SK-N-SH (cell line): ENCODE measurements at regions of chr1 and their contacts with region 1.

Region 1: DNA sequence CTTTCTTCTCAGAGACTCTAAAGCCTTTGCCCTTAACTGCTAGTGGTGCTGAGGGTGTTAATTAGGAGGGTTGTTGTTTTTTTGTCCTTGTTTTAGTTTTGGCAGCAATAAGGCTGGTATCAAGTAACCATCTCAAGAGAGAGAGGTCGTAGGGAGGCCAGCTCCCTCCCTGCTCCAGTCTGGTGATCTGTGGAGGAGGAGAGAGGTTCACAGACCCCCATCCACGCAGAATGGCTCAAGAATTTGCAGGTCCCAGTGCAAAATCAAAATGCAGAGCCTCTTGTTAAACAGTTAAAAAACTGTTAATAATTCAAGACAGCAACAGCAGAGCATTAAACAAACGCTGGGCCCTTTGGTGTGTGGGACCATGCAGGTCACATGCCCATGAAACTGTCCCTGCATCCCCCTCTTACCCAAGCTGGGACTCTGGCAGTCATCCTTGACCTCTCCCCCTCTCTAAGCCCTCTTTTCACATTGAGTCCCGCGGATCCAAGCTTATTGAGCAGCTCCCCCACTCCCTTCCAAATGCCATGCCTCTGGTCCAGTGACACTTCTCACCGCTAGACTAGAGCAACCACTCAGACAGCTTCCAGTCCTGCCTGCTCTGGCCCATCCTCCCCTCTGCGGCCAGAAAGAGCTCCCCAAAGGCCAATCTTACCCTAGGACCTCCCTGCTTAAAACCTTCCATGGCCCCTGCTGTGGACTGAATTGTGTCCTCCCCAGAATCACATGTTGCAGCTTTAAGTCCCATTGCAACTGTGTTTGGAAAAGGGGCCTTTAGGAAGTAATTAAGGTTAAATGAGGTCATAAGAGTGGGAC is 47.7 kb upstream of the RPL11 start:
- DNase-seq: no peak
- H3K4me3 ChIP-seq: no peak overlapping the region
- H3K27ac ChIP-seq: no peak overlapping the region; a peak in 1 of 4 replicates
- H3K4me1 ChIP-seq: peaks cover 0 to 19% of the 10 kb centered on the region in 2 experiments; a peak in 1 of 4 replicates
- H3K27me3 ChIP-seq: no peaks in the 10 kb centered on the region
- CTCF ChIP-seq: no peak
- EP300 ChIP-seq: no peak
- RAD21 ChIP-seq: no peak

Region 2: GRCh38 chr1:23664837-23665795 is 21.2 kb after region 1 on chr1:
- CTCF ChIA-PET with region 1: interaction called, 95 read pairs
- POLR2A ChIA-PET with region 1: no interaction called
- DNase-seq: peak; percentile 54
- H3K4me3 ChIP-seq: no peak overlapping the region; a peak in 1 of 4 replicates
- H3K27ac ChIP-seq: no peak overlapping the region
- H3K4me1 ChIP-seq: no peaks in the 10 kb centered on the region
- H3K27me3 ChIP-seq: no peaks in the 10 kb centered on the region
- CTCF ChIP-seq: peak; percentile 66
- EP300 ChIP-seq: no peak
- RAD21 ChIP-seq: peak; percentile 68

Region 3: DNA sequence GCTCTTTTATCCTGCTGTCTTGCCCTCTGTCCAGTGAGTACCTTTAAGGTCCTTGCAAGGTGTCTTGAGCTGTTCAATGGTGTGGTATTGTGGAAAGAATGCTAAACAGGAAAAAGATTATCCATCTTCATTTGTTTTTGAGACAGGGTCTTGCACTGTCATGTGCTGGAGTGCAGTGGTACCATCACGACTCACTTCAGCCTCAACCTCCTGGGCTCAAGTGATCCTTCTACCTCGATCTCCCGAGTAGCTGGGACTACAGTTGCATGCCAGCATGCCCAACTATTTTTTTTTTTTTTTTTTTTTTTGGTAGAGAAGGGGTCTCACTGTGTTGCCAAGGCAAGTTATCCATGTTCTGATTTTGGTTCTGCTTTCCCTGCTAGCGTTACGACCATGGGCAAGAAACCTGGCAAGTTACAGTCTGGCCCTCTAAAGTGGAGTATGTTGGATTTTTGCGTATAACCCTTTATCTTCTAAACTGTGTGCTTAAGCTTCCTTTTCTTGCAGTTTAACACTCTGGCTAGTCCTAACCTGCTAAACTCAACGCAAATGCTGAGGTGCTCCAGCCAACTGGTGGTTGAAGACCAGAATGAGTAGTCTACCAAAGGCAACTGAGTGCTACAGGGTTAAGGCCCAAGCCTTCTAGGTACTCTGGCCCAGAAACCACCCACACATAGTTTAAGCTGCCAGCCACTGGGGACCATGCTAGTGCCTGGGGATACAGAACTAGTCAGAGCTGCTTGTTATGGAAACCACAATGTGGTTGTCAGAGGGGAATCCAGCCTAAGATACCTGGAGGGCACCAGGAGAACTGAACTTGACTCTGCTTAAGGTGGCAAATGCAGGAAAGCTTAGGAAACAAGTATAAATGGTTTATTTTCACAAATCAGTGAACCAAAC is 55.6 kb after region 1 on chr1:
- CTCF ChIA-PET with region 1: no interaction called
- POLR2A ChIA-PET with region 1: no interaction called
- DNase-seq: no peak
- H3K4me3 ChIP-seq: no peak overlapping the region
- H3K27ac ChIP-seq: no peak overlapping the region
- H3K4me1 ChIP-seq: peaks cover 5 to 19% of the 10 kb centered on the region in 2 experiments; a peak in 3 of 4 replicates
- H3K27me3 ChIP-seq: no peaks in the 10 kb centered on the region
- CTCF ChIP-seq: no peak
- EP300 ChIP-seq: no peak
- RAD21 ChIP-seq: no peak